Lower lobe of right lung (tissue), 2 donors: ENCODE measurements at regions of chr9 and their contacts with region 1.

Region 1: DNA sequence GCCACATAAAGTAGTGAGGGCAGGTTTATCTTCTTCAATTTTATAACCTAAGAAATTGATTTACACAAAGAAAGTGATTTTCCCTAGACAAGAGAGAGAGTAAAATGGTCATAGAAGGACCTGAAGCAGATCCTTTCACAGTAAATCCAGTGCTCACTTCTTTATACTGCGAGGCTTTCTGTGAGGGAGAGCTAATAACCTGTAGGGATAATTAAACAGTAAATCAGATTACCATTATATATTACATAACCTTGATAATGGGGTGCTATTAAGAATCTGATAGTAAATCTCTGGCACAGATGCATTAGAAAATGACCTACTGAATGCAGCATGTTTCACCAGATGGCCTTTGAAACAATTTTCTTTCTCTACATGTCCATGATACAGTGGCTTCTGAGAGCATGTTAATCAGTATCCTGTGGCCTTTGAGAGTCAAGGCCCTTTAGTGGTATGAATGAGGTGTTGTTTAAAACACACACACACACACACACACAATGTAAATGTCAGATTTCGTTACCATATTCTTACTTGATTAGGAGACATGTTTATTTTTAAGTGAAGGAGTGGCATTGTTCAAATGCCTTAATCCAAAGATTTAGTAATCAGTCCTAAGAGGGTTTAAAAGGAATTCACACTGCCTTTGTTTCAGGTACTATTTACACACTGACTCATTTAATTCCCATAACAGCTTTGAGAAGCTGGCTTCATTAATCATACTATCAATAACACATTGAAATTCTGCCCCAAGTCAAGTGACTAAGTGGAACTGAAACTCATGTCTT is 124.7 kb downstream of the ALDH1A1 start:
- DNase-seq: no peak
- ATAC-seq: peak; percentile 77 to 94
- H3K4me3 ChIP-seq: no peak overlapping the region
- H3K27ac ChIP-seq: peak overlapping the region; percentile 51
- H3K4me1 ChIP-seq: peaks cover 9% of the 10 kb centered on the region
- H3K27me3 ChIP-seq: no peaks in the 10 kb centered on the region
- CTCF ChIP-seq: no peak

Region 2: GRCh38 chr9:72292256-72292682 is 535.9 kb before region 1 on chr9:
- intact Hi-C with region 1: loop called (anchors 10 kb)
- DNase-seq: no peak
- ATAC-seq: peak; percentile 14 to 52
- H3K4me3 ChIP-seq: no peak overlapping the region
- H3K27ac ChIP-seq: peak overlapping the region; percentile 60
- H3K4me1 ChIP-seq: peaks cover 20% of the 10 kb centered on the region
- H3K27me3 ChIP-seq: no peaks in the 10 kb centered on the region
- CTCF ChIP-seq: peak; percentile 59

Region 3: GRCh38 chr9:72687331-72687730 is 140.8 kb before region 1 on chr9:
- intact Hi-C with region 1: no loop called
- DNase-seq: no peak
- ATAC-seq: no peak
- H3K4me3 ChIP-seq: no peak overlapping the region
- H3K27ac ChIP-seq: no peak overlapping the region
- H3K4me1 ChIP-seq: no peaks in the 10 kb centered on the region
- H3K27me3 ChIP-seq: no peaks in the 10 kb centered on the region
- CTCF ChIP-seq: no peak